HEK293 (cell line): ENCODE measurements at regions of chr12 and their contacts with region 1.

Region 1: DNA sequence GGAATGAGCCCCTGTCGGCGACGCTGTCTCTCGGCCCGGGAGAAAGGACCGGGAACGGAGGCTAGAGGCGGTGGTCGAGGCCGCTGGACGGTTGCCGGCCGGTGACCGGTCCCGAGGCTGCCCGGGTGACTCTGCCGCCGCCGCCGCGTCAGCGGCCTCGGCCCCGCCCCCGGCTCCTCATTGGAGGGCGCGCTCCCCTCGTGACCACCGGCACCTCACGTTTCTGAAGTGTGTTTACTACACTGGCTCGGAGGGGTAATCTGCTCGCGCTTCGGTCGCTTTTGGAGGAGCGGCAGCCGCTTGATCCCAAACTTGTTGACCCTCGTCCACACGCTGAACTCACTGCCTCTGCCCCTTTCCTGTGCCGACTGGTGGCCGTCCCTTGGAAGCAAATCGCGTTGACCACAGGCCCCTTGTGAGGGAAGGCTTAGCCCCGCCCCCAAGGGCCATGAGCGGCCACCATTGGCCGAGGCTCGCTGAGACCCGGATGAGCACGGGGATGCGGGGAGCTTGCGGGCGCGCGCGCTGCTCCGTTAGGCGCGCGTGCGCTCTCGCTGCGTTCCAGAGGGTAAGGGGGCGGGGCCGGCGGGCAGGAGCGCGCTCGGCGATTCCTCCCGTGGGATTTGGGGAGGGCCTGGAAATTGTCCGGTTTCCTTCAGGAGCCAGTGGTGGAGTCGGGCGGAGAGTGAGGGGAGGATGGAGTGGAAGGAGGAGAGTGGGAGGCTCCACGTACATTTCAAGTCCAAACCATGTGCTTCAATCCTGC is at the start of gene CRY1:
- H3K4me3 ChIP-seq: peak within 1 kb of the TSS; percentile 89
- H3K27ac ChIP-seq: peak within 1 kb of the TSS; percentile 44; the same call in 1 of the 2 replicates
- H3K4me1 ChIP-seq: peaks cover 6% of the 10 kb centered on the region; the same call in 1 of the 2 replicates
- CTCF ChIP-seq: 0 out of 2 replicates have a peak, but pooled peaks have one; percentile 14

Region 2: DNA sequence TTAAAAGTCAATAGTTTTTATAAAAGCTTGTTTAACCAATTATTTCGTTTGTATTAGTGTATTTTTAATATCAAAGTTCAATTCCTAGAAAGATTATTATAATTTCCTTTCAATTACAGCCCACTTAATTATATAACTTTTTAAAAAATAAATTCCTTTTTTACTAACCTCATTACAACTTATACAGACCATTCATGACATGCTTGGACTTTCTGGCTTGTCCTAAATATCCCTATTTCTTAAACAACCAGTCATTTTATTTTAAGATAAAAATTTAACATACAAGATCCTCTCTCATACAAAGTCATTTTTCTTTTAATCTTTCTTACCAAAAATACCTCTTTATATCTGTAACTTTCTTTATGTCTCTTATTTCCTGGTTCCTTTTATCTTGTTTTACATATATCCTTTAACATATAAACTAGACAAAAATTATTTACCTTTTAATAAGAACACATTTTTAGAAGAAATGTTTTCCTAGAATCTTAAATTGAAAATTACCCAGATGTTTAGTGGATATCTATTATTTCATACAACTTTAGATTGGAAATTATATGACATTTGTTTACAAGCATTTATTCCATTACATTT is 148.2 kb before region 1 on chr12:
- CTCF ChIA-PET with region 1: no interaction called
- POLR2A ChIA-PET with region 1: no interaction called
- H3K4me3 ChIP-seq: no peak overlapping the region
- H3K27ac ChIP-seq: no peak overlapping the region
- H3K4me1 ChIP-seq: no peaks in the 10 kb centered on the region
- CTCF ChIP-seq: no peak

Region 3: GRCh38 chr12:107079172-107080011 is 14.2 kb before region 1 on chr12:
- CTCF ChIA-PET with region 1: interaction called, 18 read pairs
- POLR2A ChIA-PET with region 1: no interaction called
- H3K4me3 ChIP-seq: no peak overlapping the region
- H3K27ac ChIP-seq: no peak overlapping the region
- H3K4me1 ChIP-seq: no peaks in the 10 kb centered on the region
- CTCF ChIP-seq: no peak